Endothelial cell of umbilical vein (primary cell): ENCODE measurements at regions of chr11 and their contacts with region 1.

Region 1: DNA sequence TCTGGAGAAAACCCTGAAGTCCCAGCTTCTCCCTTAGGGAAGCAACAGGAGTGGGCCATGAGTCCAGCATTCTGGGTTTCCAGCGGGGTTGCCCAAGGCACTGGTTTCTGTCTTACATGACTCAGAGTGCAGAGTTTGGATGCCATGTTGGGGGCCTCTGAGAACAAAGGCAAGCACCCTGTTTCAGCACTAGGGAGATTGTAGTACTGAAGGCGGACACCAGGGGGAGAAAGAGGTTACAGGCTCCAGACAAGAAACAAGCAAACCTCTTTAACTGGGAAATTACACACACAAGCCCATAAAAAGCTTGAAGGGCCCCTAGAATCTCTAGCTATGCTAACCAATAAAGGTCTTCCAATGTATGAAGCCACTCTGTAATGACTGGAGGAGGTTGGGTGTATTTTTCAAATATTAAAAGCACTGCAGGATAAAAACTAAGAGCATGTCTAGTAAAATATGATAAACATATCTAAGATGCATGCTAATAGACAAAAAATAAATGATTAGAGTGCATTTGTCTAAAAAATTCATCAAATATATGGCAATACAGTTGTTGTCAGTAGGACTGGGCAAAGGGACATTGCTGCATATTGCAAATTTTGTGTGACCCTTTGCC is 7.1 kb downstream of the MS4A6E start:
- DNase-seq: peak; percentile 79
- H3K4me3 ChIP-seq: no peak overlapping the region
- H3K27ac ChIP-seq: no peak overlapping the region
- H3K4me1 ChIP-seq: no peaks in the 10 kb centered on the region
- H3K27me3 ChIP-seq: peaks cover 0 to 3% of the 10 kb centered on the region in 2 experiments
- CTCF ChIP-seq: peak; percentile 65 to 85
- POLR2A ChIP-seq: no peak

Region 2: GRCh38 chr11:60318726-60319125 is 15.4 kb before region 1 on chr11:
- CTCF ChIA-PET with region 1: interaction called, 19 read pairs
- POLR2A ChIA-PET with region 1: no interaction called
- dilution Hi-C with region 1: no loop called
- intact Hi-C with region 1: no loop called
- DNase-seq: no peak
- H3K4me3 ChIP-seq: no peak overlapping the region
- H3K27ac ChIP-seq: no peak overlapping the region
- H3K4me1 ChIP-seq: peaks cover 13% of the 10 kb centered on the region
- H3K27me3 ChIP-seq: no peaks in the 10 kb centered on the region
- CTCF ChIP-seq: no peak
- POLR2A ChIP-seq: no peak

Region 3: GRCh38 chr11:60530454-60531100 is 196.5 kb after region 1 on chr11:
- CTCF ChIA-PET with region 1: no interaction called
- POLR2A ChIA-PET with region 1: no interaction called
- dilution Hi-C with region 1: no loop called
- intact Hi-C with region 1: no loop called
- DNase-seq: no peak
- H3K4me3 ChIP-seq: no peak overlapping the region
- H3K27ac ChIP-seq: no peak overlapping the region
- H3K4me1 ChIP-seq: no peaks in the 10 kb centered on the region
- H3K27me3 ChIP-seq: no peaks in the 10 kb centered on the region
- CTCF ChIP-seq: no peak
- POLR2A ChIP-seq: no peak

Region 4: DNA sequence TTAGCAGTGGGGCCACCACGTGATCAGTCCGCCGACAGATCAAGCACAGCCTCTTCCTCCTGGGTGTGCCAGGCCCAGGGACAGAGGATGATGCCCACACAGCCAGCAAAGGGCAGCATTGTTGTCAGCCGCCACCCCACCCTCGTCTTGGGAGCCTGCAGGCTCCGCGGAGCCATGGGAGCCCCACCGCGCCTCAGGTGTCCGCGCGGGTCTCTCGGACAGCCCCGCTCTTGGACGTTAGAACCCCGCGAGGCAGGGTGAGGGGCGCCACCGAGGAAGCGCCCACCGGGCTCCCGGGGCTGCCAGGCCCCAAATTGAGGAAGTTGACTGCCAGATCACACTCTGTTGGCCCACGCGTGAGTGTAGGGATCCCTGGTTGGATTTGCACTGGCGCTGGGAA is 281.4 kb after region 1 on chr11:
- CTCF ChIA-PET with region 1: interaction called, 10 read pairs
- POLR2A ChIA-PET with region 1: no interaction called
- dilution Hi-C with region 1: no loop called
- intact Hi-C with region 1: no loop called
- DNase-seq: no peak
- H3K4me3 ChIP-seq: no peak overlapping the region
- H3K27ac ChIP-seq: no peak overlapping the region
- H3K4me1 ChIP-seq: no peaks in the 10 kb centered on the region
- H3K27me3 ChIP-seq: peaks cover 2% of the 10 kb centered on the region in 2 experiments
- CTCF ChIP-seq: no peak
- POLR2A ChIP-seq: no peak

Region 5: DNA sequence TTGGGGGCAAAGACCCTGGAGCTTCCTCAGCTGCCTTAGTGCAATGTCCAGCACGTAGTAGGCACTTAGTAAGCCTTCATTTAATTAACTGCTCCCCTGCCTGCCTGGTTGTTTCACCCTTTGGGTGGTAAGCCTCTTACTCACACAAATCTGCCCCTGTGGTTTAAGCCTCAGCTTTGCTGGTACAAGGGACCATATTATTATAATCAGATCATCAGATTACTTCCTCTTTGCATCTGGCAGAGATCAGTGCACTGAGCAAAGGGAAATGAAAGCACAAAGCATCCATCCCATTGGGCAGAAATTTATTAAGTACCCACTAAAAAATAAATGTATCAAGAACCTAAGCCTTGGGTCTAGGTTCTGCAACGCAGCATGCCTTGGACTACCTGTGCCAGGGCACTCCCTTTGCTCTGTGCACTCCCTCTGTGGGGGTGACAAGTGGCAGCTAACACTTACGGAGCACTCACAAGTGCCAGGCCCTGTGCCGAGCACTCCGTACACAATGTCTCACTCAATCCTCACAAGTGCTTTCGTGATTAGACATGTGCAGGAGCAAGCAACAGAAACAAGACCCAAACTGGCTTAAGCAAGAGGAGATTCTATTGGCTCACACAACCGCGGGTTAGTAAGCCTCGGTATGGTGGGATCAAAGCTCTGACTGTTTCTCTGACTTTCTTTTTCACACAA is 1311.2 kb after region 1 on chr11:
- CTCF ChIA-PET with region 1: no interaction called
- POLR2A ChIA-PET with region 1: no interaction called
- dilution Hi-C with region 1: no loop called
- intact Hi-C with region 1: no loop called
- DNase-seq: no peak
- H3K4me3 ChIP-seq: no peak overlapping the region
- H3K27ac ChIP-seq: no peak overlapping the region
- H3K4me1 ChIP-seq: no peaks in the 10 kb centered on the region
- H3K27me3 ChIP-seq: no peaks in the 10 kb centered on the region
- CTCF ChIP-seq: no peak
- POLR2A ChIP-seq: no peak